ENCODE measurements at regions of chr11 and their contacts with region 1.

Region 1: GRCh38 chr11:121352251-121352891 is 59.8 kb downstream of the SC5D start:
- DNase-seq: peak; percentile 30 to 83 (median 74)
- H3K4me3 ChIP-seq: peak overlapping the region in 3 of 59 donors; percentile 0 to 28 (median 9)
- H3K27ac ChIP-seq: peak overlapping the region in 56 of 59 donors; percentile 9 to 88 (median 70)
- H3K27me3 ChIP-seq: no peaks in the 10 kb centered on the region
- CTCF ChIP-seq: peak in 3 of 56 donors; percentile 8 to 31 (median 9)

Region 2: DNA sequence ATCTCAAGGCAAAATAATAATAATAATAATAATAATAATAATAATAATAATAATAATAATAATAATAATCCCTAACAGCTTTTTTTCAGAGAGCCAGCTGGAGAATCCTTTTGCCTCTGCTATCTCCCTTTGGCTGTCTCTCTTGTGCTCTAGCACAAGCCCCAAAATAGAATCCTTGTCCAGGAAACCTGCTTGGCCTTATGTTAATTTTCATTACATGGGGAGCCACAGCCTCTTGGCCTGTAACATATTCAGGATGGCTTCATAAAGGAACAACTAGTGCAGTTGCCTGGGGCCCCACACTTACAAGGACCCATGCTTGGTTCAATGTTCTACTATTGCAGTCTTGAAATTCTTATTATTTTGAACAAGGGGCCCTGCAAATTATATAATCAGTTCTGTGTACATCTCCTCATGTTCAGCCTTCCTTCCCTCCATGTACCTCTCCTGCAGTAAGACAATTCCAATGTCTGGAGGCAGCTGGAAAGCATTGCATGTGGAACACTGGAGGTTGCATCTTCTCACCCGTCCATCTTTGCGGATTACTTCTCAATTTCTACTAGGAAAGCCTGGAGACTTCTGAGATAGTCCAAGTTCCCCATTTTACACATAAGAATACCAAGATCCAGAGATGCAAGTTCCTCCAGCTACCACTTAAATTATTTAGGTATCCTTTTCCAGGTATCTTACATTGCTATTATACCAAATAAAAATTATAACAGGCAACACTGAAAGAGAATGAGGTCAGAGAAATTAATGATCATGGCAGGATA is 62.0 kb after region 1 on chr11:
- intact Hi-C with region 1: no loop called
- DNase-seq: peak in 1 of 10 donors; percentile 38
- H3K4me3 ChIP-seq: no peak overlapping the region
- H3K27ac ChIP-seq: no peak overlapping the region
- H3K27me3 ChIP-seq: no peaks in the 10 kb centered on the region
- CTCF ChIP-seq: no peak

Region 3: GRCh38 chr11:122317305-122317704 is 964.9 kb after region 1 on chr11:
- intact Hi-C with region 1: loop called in 1 of 2 experiments (anchors 5 kb)
- DNase-seq: no peak
- H3K4me3 ChIP-seq: no peak overlapping the region
- H3K27ac ChIP-seq: peak overlapping the region in 2 of 59 donors; percentile 7 to 9
- H3K27me3 ChIP-seq: no peaks in the 10 kb centered on the region
- CTCF ChIP-seq: no peak

Measured in dorsolateral prefrontal cortex (tissue), 120 donors.